H1 (cell line): ENCODE measurements at regions of chr5 and their contacts with region 1.

Region 1: DNA sequence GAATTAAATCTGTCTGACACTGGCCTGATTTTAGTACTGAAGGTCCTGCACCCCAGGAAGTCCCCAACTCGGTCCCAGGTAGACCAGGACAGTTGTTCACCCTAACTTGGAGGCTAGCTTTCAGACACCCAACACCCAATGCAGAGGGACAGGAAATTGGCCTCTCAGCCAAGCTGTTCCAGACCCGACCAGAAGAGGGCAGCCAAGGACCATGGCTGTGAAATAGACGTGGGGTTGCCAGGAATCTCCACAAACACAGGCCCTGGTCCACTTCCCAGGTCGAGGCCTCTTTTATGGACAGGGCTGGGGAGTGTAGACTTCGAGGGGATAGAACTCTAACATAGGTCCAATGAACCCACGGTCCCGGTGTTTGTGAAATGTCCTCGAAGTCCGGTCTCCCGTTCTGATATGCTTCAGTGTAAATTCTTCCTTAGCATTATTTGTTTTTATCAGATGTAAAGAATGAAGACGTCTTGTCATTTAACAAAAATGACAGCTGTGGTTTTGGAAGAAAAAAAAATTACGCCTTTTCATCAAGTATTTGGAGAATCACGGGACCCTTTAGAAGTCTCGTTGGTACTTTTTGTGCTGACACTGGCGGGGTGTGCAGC is 260.3 kb upstream of the ADAMTS16 start:
- DNase-seq: peak; percentile 61 to 97
- H3K4me3 ChIP-seq: no peak overlapping the region
- H3K27ac ChIP-seq: no peak overlapping the region
- H3K4me1 ChIP-seq: no peaks in the 10 kb centered on the region
- H3K27me3 ChIP-seq: no peaks in the 10 kb centered on the region
- CTCF ChIP-seq: peak; percentile 93 to 99 (median 98)
- EP300 ChIP-seq: no peak
- POLR2A ChIP-seq: no peak
- RAD21 ChIP-seq: peak; percentile 99 to 100

Region 2: DNA sequence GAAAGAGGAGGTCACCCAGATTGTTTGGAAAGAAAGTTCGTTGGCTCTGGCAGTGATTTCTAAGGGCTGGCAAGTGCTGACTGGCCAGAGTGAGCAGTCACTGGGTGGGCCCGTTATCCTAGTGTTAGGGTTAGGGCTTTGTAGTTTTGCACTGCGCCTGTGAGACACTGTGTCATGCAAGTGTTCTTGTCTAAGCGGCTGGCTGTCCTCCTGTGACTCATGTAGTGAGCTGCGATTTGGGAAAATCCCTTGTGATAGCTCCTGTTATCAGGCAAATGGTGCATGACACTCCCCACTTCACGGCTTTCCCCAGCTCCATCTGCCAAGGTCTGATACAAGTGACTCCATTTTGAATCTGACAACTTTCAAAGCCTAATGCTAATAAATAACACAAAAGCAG is 265.7 kb before region 1 on chr5:
- CTCF ChIA-PET with region 1: no interaction called
- POLR2A ChIA-PET with region 1: no interaction called
- DNase-seq: no peak
- H3K4me3 ChIP-seq: no peak overlapping the region
- H3K27ac ChIP-seq: no peak overlapping the region
- H3K4me1 ChIP-seq: no peaks in the 10 kb centered on the region
- H3K27me3 ChIP-seq: no peaks in the 10 kb centered on the region
- CTCF ChIP-seq: no peak
- EP300 ChIP-seq: no peak
- POLR2A ChIP-seq: no peak
- RAD21 ChIP-seq: no peak

Region 3: DNA sequence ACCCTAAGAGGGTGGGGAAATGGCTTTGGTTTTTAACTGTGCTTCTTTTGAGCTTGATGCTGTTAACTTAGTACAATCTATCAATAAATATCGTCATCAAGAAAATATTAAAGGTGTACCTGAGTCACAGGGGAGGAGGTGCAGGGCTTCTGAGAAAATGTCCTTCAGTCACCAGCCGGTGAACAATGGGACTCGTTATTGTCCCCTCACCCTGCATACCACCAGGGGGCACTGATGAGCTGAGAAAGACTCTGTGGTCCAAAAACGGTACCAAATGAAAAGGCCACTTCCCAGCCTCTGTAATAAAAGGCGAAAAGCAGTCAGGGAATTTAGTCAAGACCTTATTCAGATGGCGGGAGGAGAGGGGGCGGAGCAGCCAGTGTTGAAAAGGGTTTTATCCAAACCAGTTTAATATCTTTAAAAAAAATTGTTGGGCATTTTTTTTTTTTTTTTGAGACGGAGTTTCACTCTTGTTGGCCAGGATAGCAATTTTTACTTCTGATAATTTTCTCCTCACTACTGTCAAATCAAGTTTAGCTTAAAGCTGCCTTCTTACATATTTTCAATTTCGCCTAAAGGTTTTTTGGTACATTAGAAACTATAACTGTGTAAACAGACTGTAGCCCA is 11.6 kb before region 1 on chr5:
- CTCF ChIA-PET with region 1: interaction called, 11 read pairs
- POLR2A ChIA-PET with region 1: no interaction called
- DNase-seq: peak in 1 of 2 experiments; percentile 88
- H3K4me3 ChIP-seq: no peak overlapping the region
- H3K27ac ChIP-seq: no peak overlapping the region
- H3K4me1 ChIP-seq: no peaks in the 10 kb centered on the region
- H3K27me3 ChIP-seq: no peaks in the 10 kb centered on the region
- CTCF ChIP-seq: peak; percentile 71 to 82 (median 78)
- EP300 ChIP-seq: no peak
- POLR2A ChIP-seq: no peak
- RAD21 ChIP-seq: peak; percentile 81 to 82

Region 4: GRCh38 chr5:4941957-4942830 is 62.4 kb after region 1 on chr5:
- CTCF ChIA-PET with region 1: interaction called, 18 read pairs
- POLR2A ChIA-PET with region 1: no interaction called
- DNase-seq: peak in 1 of 2 experiments; percentile 90
- H3K4me3 ChIP-seq: no peak overlapping the region
- H3K27ac ChIP-seq: no peak overlapping the region
- H3K4me1 ChIP-seq: peaks cover 0 to 5% (median 4%) of the 10 kb centered on the region in 4 experiments; a peak in 5 of 7 replicates
- H3K27me3 ChIP-seq: no peaks in the 10 kb centered on the region
- CTCF ChIP-seq: peak; percentile 72 to 91 (median 87)
- EP300 ChIP-seq: no peak
- POLR2A ChIP-seq: no peak
- RAD21 ChIP-seq: peak; percentile 70 to 80

Region 5: GRCh38 chr5:4983701-4984100 is 103.9 kb after region 1 on chr5:
- CTCF ChIA-PET with region 1: no interaction called
- POLR2A ChIA-PET with region 1: no interaction called
- DNase-seq: no peak
- H3K4me3 ChIP-seq: no peak overlapping the region
- H3K27ac ChIP-seq: no peak overlapping the region
- H3K4me1 ChIP-seq: no peaks in the 10 kb centered on the region
- H3K27me3 ChIP-seq: no peaks in the 10 kb centered on the region
- CTCF ChIP-seq: no peak
- EP300 ChIP-seq: no peak
- POLR2A ChIP-seq: no peak
- RAD21 ChIP-seq: no peak

Region 6: DNA sequence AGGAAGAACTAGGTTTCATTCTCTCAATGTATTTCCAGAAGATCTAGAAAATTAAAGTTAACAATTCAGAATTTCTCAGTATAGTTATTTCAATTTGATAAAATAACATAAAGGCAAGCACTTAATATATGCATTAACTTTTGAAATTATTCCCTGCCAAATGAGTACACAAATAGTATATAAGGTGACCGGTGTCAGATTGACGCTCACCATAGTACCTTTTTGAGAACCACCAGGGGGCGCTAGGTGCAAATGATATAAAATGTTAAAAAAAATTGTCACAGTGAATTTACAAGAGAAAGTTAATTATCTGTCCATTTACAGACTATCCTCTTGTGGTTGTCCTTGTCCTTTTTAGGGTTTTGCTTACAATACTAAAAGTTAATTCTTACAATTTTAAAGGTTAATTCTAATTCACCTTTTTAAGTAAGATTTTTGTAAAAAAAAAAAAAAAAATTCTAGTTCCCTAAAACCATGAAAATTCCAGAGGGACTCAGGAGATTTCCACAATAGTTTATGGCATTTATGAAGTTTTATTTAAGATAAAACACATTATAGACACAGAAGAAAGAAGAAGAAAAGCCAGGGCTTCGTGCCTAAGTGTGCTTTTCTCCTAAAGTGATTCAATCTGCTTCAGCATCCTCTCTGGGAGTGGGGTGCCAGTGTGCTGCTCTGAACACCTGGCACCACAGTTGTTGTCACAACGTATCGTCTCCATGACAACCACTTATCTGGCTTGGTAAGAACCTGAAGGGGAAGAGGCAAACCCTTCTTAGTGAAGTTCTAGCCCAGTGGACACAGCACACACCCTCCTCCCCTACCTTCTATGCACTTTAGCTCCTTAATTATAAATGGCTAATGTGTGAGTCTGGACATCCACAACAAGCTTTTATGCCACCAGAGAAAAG is 262.1 kb after region 1 on chr5:
- CTCF ChIA-PET with region 1: interaction called, 14 read pairs
- POLR2A ChIA-PET with region 1: interaction called, 8 read pairs
- DNase-seq: no peak
- H3K4me3 ChIP-seq: peak overlapping the region in 1 of 4 experiments; percentile 92; a peak in 3 of 8 replicates
- H3K27ac ChIP-seq: no peak overlapping the region; the same call in 1 of the 2 replicates
- H3K4me1 ChIP-seq: peaks cover 3 to 9% (median 5%) of the 10 kb centered on the region in 4 experiments; a peak in 6 of 7 replicates
- H3K27me3 ChIP-seq: peaks cover 0 to 20% (median 8%) of the 10 kb centered on the region in 4 experiments; a peak in 5 of 7 replicates
- CTCF ChIP-seq: peak in 2 of 3 experiments; percentile 42 to 44; a peak in 2 of 4 replicates
- EP300 ChIP-seq: 0 out of 3 replicates have a peak, but pooled peaks of 1 of the 2 experiments have one; percentile 47
- POLR2A ChIP-seq: no peak
- RAD21 ChIP-seq: peak; percentile 74 to 79

Region 7: GRCh38 chr5:5398046-5398445 is 518.2 kb after region 1 on chr5:
- CTCF ChIA-PET with region 1: interaction called, 26 read pairs
- POLR2A ChIA-PET with region 1: no interaction called
- DNase-seq: no peak
- H3K4me3 ChIP-seq: no peak overlapping the region
- H3K27ac ChIP-seq: no peak overlapping the region
- H3K4me1 ChIP-seq: no peaks in the 10 kb centered on the region
- H3K27me3 ChIP-seq: no peaks in the 10 kb centered on the region
- CTCF ChIP-seq: no peak
- EP300 ChIP-seq: no peak
- POLR2A ChIP-seq: no peak
- RAD21 ChIP-seq: no peak

Region 8: DNA sequence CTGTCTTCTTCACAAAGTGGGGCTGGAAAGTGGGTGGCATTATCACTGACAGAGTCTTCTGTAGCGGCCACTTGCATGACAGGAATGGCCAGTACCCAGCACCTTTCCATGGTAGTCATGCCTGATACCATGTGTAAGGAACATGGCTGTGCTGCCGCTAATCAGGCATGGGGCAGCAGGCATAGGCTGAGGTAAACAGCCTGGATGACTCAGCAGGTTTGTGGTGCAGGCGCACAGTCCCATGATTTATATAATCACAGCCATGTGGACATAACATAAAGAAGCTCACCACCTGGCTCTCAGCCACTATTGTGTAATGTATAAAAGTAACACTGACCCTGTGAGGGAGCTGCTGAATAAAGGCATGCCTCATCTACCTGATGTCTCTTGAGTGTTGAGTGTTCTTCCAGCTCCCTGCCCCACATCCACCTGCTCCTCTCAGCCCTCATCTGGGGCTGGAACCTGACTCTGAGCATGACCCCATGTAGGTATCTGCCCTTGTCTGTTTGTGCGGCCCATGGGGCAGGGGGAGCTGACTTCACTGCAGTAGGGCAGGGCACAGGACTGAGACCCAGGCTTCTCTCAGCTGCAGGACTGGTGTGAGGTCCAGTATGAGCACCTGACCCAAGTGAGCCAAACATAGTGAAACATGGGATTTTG is 529.5 kb after region 1 on chr5:
- CTCF ChIA-PET with region 1: interaction called, 18 read pairs
- POLR2A ChIA-PET with region 1: no interaction called
- DNase-seq: peak in 1 of 2 experiments; percentile 63
- H3K4me3 ChIP-seq: no peak overlapping the region
- H3K27ac ChIP-seq: no peak overlapping the region
- H3K4me1 ChIP-seq: no peaks in the 10 kb centered on the region
- H3K27me3 ChIP-seq: no peaks in the 10 kb centered on the region
- CTCF ChIP-seq: no peak
- EP300 ChIP-seq: no peak
- POLR2A ChIP-seq: no peak
- RAD21 ChIP-seq: no peak